OCI-LY7 (cell line): ENCODE measurements at regions of chr6 and their contacts with region 1.

Region 1: DNA sequence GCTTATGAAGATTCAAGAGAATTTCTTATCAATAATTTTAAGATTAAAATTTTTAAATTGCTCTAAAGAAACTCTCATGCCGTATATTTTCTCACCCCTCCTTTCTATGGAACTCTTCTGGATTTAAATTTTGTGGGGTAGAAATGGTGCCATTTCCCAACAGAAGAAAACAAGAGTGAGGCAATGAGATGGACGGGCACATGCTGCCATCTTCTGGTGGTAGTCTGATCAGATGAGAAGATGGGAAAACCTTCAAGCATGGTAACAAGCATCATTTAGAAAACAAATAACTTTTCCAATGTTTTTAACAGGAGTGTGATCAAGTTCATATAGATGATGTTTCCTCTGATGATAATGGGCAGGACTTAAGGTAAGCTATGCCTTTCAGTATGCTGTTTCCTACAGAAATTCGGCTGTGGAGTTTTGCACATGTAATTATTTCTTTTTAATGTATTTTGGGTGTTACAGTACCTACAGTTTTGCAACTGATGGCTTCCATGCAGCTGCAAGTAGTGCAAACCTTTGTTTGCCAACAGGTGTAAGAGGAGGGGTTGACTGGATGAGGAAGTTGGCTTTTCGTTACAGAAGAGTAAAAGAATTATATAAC is 271.4 kb downstream of the EYA4 start:
- DNase-seq: peak; percentile 24
- H3K4me3 ChIP-seq: no peak overlapping the region
- H3K27ac ChIP-seq: no peak overlapping the region
- H3K4me1 ChIP-seq: no peaks in the 10 kb centered on the region
- CTCF ChIP-seq: peak; percentile 80

Region 2: GRCh38 chr6:132830334-132830751 is 682.2 kb before region 1 on chr6:
- CTCF ChIA-PET with region 1: no interaction called
- POLR2A ChIA-PET with region 1: no interaction called
- intact Hi-C with region 1: loop called (anchors 10 kb)
- DNase-seq: peak; percentile 25
- H3K4me3 ChIP-seq: no peak overlapping the region
- H3K27ac ChIP-seq: no peak overlapping the region
- H3K4me1 ChIP-seq: no peaks in the 10 kb centered on the region
- CTCF ChIP-seq: peak; percentile 75

Region 3: DNA sequence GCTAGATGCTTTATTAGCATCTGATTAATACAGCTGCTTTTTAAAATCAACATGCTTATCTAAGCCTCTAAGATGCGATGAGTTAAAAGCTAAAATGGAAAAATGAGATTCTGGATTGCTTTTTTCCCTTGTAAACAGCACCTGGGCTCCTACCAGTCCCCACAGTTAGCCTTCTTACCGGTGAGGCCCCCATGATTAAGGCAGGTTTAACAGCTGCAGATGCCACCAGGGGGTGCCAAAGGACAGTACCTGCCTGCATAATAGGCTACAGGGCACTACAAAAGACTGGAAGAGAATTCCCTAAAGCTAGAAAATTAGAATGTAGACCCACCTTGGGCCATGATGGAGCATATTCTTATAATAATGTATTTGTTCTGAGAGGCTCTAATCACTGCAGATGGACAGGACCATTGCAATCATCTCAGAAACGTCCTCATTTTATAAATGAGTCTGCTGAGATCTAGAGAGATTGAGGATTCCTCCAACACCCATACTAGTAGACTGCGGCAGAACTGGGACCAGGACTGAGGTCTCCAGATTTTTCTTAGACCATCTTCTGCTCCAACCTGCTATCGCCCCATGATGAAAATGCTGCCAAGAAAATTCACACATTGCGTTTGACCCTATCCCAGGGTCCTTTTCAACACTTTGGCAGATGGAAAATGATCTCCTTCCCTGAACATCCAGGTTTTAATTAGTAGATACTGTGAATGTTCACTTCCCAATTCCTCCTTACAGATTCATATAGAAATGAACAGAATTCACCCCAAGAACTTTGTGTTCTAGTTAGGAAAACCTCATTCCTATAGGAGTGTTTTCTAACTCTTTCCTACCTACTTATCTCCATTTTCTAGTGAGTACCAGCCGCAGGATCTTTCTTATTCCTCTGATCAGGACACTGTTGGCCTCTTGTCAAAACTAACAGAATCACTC is 549.3 kb before region 1 on chr6:
- CTCF ChIA-PET with region 1: no interaction called
- POLR2A ChIA-PET with region 1: no interaction called
- intact Hi-C with region 1: loop called (anchors 5 kb)
- DNase-seq: peak; percentile 58
- H3K4me3 ChIP-seq: no peak overlapping the region
- H3K27ac ChIP-seq: no peak overlapping the region
- H3K4me1 ChIP-seq: no peaks in the 10 kb centered on the region
- CTCF ChIP-seq: peak; percentile 87